Adrenal gland (tissue), 19 donors: ENCODE measurements at regions of chr20 and their contacts with region 1.

Region 1: DNA sequence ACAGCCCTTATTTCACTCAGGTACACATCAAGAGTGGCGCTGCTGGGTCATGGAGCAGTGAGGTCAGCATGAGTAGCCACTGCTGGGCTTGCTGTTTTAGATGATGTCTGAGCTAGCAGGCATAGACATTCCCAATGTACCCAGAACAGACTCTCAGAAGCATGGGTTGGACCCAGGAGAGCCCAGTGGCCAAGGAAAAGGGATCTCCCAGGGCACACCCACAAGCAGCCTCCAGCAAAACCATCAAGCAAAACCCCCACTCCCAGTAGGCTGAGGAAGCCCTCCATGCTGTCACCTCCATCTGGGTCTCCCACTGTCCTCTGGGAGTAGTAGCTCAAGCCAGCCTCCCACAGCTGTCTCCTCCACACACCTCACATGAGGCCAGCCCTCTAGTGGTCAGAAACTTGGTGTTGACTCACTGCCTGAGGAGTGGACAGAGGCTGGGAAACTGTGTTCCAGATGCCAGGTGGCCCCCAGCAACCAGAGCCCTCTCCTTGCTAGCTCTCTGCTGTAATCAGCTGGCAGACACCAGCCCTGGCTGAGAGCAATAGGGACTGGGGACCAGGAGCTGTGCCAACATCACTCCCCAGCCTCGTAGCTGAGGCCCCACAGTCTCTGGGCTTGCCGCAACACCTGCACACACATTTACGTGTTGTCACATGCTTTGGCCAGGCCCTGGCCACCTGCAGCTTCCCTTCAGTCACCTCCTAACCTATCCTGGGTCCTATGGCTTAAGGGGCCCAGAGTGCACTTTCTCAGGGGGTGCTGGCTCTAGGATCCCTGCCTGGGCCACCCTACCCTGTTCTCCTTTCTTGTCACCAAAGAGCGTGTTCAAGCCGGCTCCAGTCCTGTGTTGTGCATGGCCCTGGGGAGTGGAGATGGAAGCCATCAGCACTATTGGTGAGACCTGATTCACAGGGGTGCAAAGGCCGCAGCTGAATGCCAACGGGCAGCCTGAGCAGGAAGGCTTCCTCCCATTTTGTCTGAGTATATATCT is 1.9 kb upstream of the AP5S1 start:
- DNase-seq: peak; percentile 76 to 94 (median 86)
- H3K4me3 ChIP-seq: no peak overlapping the region
- H3K27ac ChIP-seq: peak overlapping the region in 3 of 5 donors; percentile 35 to 42 (median 38)
- H3K4me1 ChIP-seq: peaks cover 10 to 18% of the 10 kb centered on the region in 2 donors
- H3K27me3 ChIP-seq: no peaks in the 10 kb centered on the region
- CTCF ChIP-seq: peak; percentile 49 to 80 (median 72)
- POLR2A ChIP-seq: no peak

Region 2: GRCh38 chr20:3786665-3787323 is 31.7 kb before region 1 on chr20 and contains the start of gene CENPB:
- intact Hi-C with region 1: loop called in 1 of 2 experiments (anchors 2 kb)
- DNase-seq: peak; percentile 86 to 93 (median 90)
- H3K4me3 ChIP-seq: peak within 1 kb of the TSS in 3 of 4 donors; percentile 34 to 74 (median 36)
- H3K27ac ChIP-seq: peak within 1 kb of the TSS; percentile 27 to 86 (median 80)
- H3K4me1 ChIP-seq: peaks cover 18 to 39% of the 10 kb centered on the region in 2 donors
- H3K27me3 ChIP-seq: no peaks in the 10 kb centered on the region
- CTCF ChIP-seq: peak; percentile 30 to 87 (median 58)
- POLR2A ChIP-seq: no peak
- total RNA-seq, gene CENPB: 41.3 to 112 (median 98.7) TPM

Region 3: GRCh38 chr20:4449957-4450715 is 631.7 kb after region 1 on chr20:
- intact Hi-C with region 1: no loop called
- DNase-seq: peak in 1 of 7 donors; percentile 19
- H3K4me3 ChIP-seq: no peak overlapping the region
- H3K27ac ChIP-seq: no peak overlapping the region
- H3K4me1 ChIP-seq: no peaks in the 10 kb centered on the region
- H3K27me3 ChIP-seq: no peaks in the 10 kb centered on the region
- CTCF ChIP-seq: peak in 3 of 6 experiments; percentile 14 to 34 (median 15)
- POLR2A ChIP-seq: no peak